Activated naive CD4-positive, alpha-beta T cell treated with anti-CD3 and anti-CD28 coated beads for 36 hours (primary cell): ENCODE measurements at regions of chr6 and their contacts with region 1.

Region 1: DNA sequence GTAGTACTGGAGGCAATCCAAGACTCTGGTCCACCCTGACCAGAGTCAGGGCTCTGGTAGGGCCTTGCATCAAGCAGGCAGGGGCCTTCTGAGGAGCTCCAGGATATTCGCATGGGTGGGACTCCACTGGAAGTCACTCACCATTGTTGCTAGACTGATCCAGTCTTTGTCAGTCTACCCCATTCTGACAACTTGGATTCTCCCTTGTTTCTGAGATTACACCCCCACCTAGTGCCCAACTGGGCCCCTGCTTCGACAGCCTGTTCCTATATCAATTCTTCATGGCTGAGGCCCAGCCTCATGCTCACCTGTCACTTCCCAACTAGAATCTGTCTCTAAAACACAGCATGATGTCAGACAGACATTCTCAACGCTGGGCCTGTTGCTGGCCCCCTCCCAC is 5.2 kb downstream of the SLC35D3 start:
- DNase-seq: peak; percentile 53
- H3K4me3 Mint-ChIP-seq: no peak overlapping the region
- H3K27ac Mint-ChIP-seq: no peak overlapping the region
- H3K4me1 Mint-ChIP-seq: peaks cover 13% of the 10 kb centered on the region
- H3K27me3 Mint-ChIP-seq: peaks cover 46% of the 10 kb centered on the region

Region 2: DNA sequence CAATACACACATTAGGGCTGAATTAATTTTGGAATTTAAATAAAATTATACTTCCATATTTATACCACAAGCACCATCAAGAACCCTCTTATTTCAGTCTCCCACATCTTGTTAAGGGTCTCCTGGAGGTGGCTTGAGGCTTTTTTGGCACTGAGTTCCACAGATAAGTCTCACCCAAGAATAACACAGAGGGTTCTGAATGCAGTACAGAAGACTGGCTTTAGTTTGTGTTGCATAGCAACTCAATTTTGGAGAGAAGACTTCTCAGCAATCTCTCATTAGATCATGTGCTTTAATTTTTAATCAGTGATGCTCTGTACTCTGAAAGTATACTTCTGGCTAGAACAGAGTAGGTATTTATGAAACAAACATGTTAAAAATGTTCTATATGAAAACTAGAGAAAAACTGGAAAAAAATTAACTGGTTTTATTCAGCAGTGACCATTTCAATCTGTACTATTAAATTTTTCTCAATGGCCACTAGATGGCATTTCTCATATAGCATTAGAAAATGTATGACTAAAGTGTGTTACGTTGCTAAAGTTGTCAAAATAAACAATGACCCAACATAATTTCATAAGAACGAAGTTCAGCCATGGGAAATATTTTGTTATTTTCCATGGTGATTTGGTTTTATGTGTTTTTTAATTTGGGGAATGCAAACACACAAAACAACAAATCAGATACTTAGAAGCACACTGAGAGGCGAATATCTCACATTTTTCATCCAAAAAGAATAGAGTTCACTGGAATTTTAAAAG is 344.4 kb before region 1 on chr6:
- CTCF ChIA-PET with region 1: no interaction called
- intact Hi-C with region 1: loop called (anchors 2 kb)
- DNase-seq: no peak
- H3K4me3 Mint-ChIP-seq: no peak overlapping the region
- H3K27ac Mint-ChIP-seq: no peak overlapping the region
- H3K4me1 Mint-ChIP-seq: no peaks in the 10 kb centered on the region
- H3K27me3 Mint-ChIP-seq: no peaks in the 10 kb centered on the region

Region 3: GRCh38 chr6:136840276-136841001 is 86.9 kb before region 1 on chr6:
- CTCF ChIA-PET with region 1: no interaction called
- intact Hi-C with region 1: loop called (anchors 5 kb)
- DNase-seq: no peak
- H3K4me3 Mint-ChIP-seq: no peak overlapping the region
- H3K27ac Mint-ChIP-seq: no peak overlapping the region
- H3K4me1 Mint-ChIP-seq: no peaks in the 10 kb centered on the region
- H3K27me3 Mint-ChIP-seq: no peaks in the 10 kb centered on the region